Posterior vena cava (tissue), 2 donors: ENCODE measurements at regions of chr7 and their contacts with region 1.

Region 1: GRCh38 chr7:15686295-15686956 is at the start of gene MEOX2:
- DNase-seq: peak; percentile 95
- total RNA-seq, gene MEOX2: 31.7 to 38.2 TPM

Region 2: GRCh38 chr7:16062269-16062668 is 375.8 kb after region 1 on chr7:
- intact Hi-C with region 1: loop called in 1 of 2 experiments (anchors 5 kb)
- DNase-seq: no peak